Left colon (tissue), 2 donors: ENCODE measurements at regions of chr10 and their contacts with region 1.

Region 1: DNA sequence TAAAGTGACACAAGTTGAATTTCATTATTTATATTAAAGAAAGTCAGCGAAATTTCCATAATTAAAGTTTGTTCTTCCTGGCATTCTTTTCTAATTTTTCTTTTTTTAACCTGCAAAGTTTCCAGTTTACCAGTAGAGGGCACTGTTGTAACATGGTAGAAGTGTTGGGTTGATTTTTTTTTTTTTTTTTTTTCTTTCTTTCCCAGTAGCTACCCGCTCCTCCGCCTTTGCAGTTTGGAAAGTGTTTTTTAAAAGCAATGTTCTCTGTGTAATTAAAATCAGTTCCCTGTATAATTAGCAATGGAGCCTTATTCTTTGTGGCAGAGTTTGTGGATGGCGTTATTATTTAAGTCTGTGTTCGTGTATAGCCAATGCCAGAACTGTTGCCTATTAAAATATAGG is 53.7 kb downstream of the TAF3 start:
- DNase-seq: no peak
- ATAC-seq: peak; percentile 37

Region 2: DNA sequence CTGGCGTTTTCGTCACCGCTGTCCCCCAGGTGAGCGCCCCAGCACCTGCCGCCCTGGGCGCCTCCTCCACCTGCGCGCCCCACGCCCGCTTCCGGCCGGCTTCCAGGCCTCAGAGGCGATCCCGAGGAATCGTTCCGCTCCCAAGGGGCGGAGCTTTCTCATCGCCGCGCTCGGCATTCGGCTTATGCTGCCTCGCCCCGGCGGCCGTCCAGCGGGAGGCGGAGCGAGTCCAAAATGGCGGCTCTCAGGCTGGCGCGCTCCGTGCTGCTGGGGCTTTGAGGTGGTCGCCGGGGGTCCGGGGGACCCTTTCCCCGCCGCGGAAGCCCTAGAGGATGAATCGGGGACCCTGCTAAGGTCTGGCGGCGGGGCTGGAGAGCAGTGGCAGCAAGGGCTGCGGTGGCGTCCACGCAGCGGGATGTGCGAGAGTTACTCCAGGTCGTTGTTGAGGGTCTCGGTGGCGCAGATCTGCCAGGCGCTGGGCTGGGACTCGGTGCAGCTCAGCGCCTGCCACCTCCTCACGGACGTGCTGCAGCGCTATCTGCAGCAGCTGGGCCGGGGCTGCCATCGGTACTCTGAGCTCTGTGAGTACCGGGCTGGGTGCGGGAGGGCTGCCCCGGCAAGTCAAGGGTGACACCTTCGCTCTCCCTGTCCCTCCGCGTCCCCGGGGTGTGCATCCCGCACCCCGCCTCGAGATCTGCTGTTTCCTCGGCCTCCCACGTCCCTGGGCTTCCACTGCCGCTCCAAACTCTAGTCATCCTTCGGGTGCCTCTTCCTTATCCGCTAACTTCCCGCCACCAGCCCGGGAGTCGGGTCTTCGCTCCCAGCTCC is 53.5 kb before region 1 on chr10 and contains the start of gene TAF3:
- intact Hi-C with region 1: no loop called
- DNase-seq: peak; percentile 90 to 95
- ATAC-seq: peak; percentile 93
- total RNA-seq, gene TAF3: 5.1 to 5.8 TPM

Region 3: DNA sequence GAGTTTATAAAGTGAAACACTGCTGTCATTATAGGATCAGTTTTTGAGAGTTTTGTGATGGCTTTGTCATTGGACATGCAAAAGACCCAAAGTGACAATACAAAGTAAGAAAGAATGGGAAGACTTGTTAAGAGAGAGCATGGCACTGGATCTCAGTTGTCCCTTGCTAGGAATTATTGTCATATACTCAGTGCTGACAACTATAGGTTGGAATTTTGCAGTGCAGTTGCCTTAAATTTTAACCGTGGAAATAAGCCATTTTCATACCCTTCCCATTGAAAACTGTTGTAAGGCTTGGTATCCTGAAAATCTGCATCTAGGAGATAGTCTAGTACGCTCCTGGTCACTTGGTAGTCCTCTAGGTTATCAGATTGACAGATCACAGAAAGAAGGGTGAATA is 1339.2 kb after region 1 on chr10:
- intact Hi-C with region 1: loop called in 1 of 2 experiments (anchors 5 kb)
- DNase-seq: no peak
- ATAC-seq: no peak

Region 4: GRCh38 chr10:9302120-9302746 is 1430.2 kb after region 1 on chr10:
- intact Hi-C with region 1: loop called in 1 of 2 experiments (anchors 10 kb)
- DNase-seq: no peak
- ATAC-seq: peak; percentile 69